Activated naive CD4-positive, alpha-beta T cell treated with anti-CD3 and anti-CD28 coated beads, Interleukin-2, amount 10 ng/mL, durations not matched to agents 7 days and 5 days (primary cell): ENCODE measurements at regions of chr13 and their contacts with region 1.

Region 1: GRCh38 chr13:107211073-107211472 is 643.1 kb upstream of the ARGLU1 start:
- DNase-seq: peak; percentile 65
- H3K4me3 Mint-ChIP-seq: no peak overlapping the region
- H3K27ac Mint-ChIP-seq: no peak overlapping the region
- H3K4me1 Mint-ChIP-seq: no peaks in the 10 kb centered on the region
- H3K27me3 Mint-ChIP-seq: no peaks in the 10 kb centered on the region

Region 2: DNA sequence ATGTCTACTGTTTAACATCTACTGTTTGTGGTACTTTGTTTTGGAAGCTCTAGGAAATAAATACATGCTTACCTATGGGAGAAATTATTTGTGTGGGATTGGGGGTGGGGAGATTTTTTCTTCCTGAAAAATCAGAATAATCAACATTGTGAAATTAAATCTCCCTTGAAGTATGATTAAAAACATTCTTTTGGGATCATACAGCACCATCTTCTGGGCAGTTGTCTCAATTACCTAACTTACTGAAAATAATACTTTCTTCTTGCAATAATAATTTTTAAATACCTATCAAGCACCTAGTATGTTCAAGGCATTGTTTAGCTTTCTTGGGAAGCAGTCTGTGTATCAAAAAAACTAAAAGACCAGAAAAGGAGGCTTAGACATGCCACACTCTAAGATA is 66.6 kb before region 1 on chr13:
- CTCF ChIA-PET with region 1: no interaction called
- DNase-seq: no peak
- H3K4me3 Mint-ChIP-seq: no peak overlapping the region
- H3K27ac Mint-ChIP-seq: no peak overlapping the region
- H3K4me1 Mint-ChIP-seq: no peaks in the 10 kb centered on the region
- H3K27me3 Mint-ChIP-seq: no peaks in the 10 kb centered on the region

Region 3: DNA sequence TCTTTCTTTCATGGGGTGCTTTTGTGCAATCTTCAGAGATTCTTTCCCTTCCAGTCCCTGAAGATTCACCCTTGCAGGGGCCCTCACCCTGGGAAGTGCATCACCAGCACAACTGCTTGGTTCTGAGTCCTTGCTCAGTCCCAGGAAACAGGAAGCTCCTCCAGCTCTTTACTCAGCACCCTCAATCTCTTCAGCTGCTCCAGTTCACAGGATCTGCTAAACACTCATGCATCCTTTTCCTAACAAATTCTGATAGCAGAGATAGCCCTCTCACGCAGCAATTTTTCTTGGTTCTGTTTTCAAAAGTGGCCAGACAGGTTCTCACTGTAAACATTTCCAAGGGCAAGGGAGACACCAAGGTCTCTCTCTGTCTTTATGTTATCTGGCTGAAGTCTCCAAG is 181.1 kb after region 1 on chr13:
- CTCF ChIA-PET with region 1: no interaction called
- DNase-seq: no peak
- H3K4me3 Mint-ChIP-seq: no peak overlapping the region
- H3K27ac Mint-ChIP-seq: no peak overlapping the region
- H3K4me1 Mint-ChIP-seq: no peaks in the 10 kb centered on the region
- H3K27me3 Mint-ChIP-seq: no peaks in the 10 kb centered on the region

Region 4: GRCh38 chr13:107650081-107650701 is 439.1 kb after region 1 on chr13:
- CTCF ChIA-PET with region 1: interaction called, 20 read pairs
- DNase-seq: peak; percentile 38
- H3K4me3 Mint-ChIP-seq: no peak overlapping the region
- H3K27ac Mint-ChIP-seq: no peak overlapping the region
- H3K4me1 Mint-ChIP-seq: no peaks in the 10 kb centered on the region
- H3K27me3 Mint-ChIP-seq: no peaks in the 10 kb centered on the region

Region 5: GRCh38 chr13:108155185-108156106 is 944.4 kb after region 1 on chr13:
- CTCF ChIA-PET with region 1: interaction called, 11 read pairs
- DNase-seq: peak; percentile 67
- H3K4me3 Mint-ChIP-seq: no peak overlapping the region
- H3K27ac Mint-ChIP-seq: no peak overlapping the region
- H3K4me1 Mint-ChIP-seq: no peaks in the 10 kb centered on the region
- H3K27me3 Mint-ChIP-seq: no peaks in the 10 kb centered on the region